CD4-positive, alpha-beta T cell (primary cell): ENCODE measurements at regions of chr1 and their contacts with region 1.

Region 1: DNA sequence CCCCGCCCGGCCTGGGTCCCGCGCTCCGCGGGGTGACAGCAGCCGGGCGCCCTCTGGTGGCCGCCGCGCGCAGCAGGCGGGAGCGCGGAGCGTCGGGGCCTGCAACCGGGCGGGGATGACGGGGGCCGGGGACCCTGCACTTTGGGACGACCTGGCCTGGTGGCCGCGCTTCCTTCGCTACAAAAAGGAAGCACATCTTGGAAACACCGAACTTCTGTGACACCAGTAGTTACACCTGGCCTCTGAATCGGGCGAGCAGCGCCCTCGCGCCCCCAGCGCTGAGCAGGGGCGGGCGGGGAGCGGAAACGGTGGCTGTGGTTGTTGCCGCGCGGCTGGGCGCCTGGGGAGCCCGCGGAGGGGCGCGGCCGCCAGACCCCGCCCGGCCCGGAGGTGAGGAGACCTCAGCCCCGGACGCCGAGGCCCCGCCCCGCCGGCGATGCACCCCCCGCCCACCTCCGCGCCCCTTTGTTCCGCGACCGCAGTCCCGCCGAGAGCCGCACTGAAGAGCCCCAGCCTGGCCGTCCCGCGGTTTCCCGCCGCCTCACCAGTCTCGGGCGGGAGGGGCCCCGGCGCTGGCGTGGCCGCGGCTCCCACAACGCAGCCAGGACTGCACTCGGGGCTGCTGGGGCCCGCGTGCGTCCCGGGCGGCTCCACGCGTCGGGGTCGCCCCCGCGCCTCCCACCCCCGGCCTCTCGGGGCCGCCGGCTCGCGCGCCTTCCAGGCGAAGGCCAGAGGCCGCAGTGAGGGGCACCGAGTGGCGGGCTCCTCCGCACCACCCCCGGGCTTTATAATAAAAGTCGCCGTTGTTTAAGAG is 59.3 kb downstream of the H3-3A start:
- DNase-seq: peak; percentile 48 to 90 (median 70)
- ATAC-seq: peak; percentile 54
- H3K4me3 ChIP-seq: peak overlapping the region; percentile 58
- H3K4me3 Mint-ChIP-seq: peak overlapping the region; percentile 80
- H3K27ac ChIP-seq: peak overlapping the region; percentile 45 to 77
- H3K27ac Mint-ChIP-seq: peak overlapping the region; percentile 91
- H3K4me1 ChIP-seq: peaks cover 37% of the 10 kb centered on the region
- H3K4me1 Mint-ChIP-seq: peaks cover 33% of the 10 kb centered on the region
- H3K27me3 ChIP-seq: no peaks in the 10 kb centered on the region
- H3K27me3 Mint-ChIP-seq: no peaks in the 10 kb centered on the region
- CTCF ChIP-seq: peak; percentile 64

Region 2: DNA sequence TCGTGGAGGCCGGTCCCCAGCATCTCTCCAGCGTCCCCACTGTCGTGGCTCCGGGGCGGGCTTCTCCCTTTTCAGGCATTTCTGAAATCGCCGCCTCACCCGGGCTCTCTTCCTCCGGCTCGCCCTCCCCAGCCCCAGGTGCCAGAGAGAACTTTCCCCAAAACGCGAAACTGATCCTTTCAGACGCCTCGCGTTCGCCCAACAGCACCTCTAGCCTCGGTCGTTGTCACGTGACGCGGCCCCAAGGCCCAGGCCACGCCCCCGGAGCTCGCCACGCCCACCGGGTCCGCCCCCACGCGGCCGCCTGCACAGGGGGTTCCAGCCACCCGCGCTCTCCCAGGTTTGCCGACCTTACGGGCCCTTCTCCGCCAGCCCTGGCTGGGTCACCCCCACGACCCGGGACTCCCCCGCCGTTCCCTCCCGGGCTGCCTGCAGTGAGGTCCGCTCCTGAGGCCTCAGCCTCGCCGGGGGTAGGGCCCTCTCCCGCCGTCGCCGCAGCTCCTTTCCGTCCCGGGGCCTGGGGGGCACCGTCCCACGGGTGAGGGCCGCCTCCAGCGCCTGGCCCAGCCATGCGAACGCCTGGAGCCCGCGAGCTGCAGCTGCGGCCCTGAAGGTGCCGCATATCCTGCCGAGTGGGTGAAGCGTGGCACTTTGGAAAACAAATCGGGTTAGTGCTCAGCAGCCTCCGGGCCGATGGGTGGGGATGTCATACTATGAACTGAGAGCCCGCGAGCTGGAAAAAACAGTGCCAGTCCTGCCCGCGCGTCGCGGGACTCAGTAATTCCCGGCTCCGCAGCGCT is 38.3 kb before region 1 on chr1:
- CTCF ChIA-PET with region 1: interaction called, 3 read pairs
- POLR2A ChIA-PET with region 1: interaction called, 5 read pairs
- intact Hi-C with region 1: loop called in 1 of 2 experiments (anchors 5 kb)
- DNase-seq: peak; percentile 83 to 96 (median 90)
- ATAC-seq: peak; percentile 94
- H3K4me3 ChIP-seq: peak overlapping the region; percentile 77
- H3K4me3 Mint-ChIP-seq: peak overlapping the region; percentile 91
- H3K27ac ChIP-seq: peak overlapping the region in 1 of 2 donors; percentile 7
- H3K27ac Mint-ChIP-seq: peak overlapping the region; percentile 39
- H3K4me1 ChIP-seq: peaks cover 19% of the 10 kb centered on the region
- H3K4me1 Mint-ChIP-seq: peaks cover 10% of the 10 kb centered on the region
- H3K27me3 ChIP-seq: no peaks in the 10 kb centered on the region
- H3K27me3 Mint-ChIP-seq: no peaks in the 10 kb centered on the region
- CTCF ChIP-seq: no peak

Region 3: DNA sequence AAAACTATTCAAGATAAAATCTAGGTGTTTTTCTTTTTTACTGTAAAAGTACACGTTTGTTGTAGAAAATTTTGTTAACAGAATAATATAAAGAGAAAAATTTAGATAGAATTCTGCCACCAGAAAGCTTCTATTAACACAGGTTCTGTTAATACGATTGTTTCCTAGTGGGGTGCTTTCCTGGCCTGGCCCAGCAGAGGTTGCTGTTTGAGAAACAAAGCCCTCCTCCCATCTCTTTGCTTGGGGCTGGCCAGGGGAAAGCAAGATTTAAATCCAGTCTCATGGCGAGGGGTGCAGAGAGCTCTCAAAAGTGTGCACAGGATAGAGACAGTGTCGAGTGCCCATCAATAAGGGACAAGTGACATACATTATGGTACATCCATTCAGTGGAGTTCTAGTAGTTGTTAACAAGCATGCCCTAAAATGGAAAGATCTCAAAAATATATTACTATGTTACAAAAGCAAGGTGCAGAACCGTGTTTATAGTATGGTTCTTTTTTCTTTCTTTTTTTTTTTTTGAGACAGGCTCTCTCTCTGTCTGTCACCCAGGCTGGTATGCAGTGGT is 79.3 kb after region 1 on chr1:
- CTCF ChIA-PET with region 1: interaction called, 40 read pairs
- POLR2A ChIA-PET with region 1: interaction called, 7 read pairs
- intact Hi-C with region 1: loop called (anchors 1 kb)
- DNase-seq: peak in 1 of 14 experiments; percentile 15
- ATAC-seq: no peak
- H3K4me3 ChIP-seq: no peak overlapping the region
- H3K4me3 Mint-ChIP-seq: no peak overlapping the region
- H3K27ac ChIP-seq: no peak overlapping the region
- H3K27ac Mint-ChIP-seq: no peak overlapping the region
- H3K4me1 ChIP-seq: no peaks in the 10 kb centered on the region
- H3K4me1 Mint-ChIP-seq: no peaks in the 10 kb centered on the region
- H3K27me3 ChIP-seq: no peaks in the 10 kb centered on the region
- H3K27me3 Mint-ChIP-seq: peaks cover 29% of the 10 kb centered on the region
- CTCF ChIP-seq: no peak

Region 4: GRCh38 chr1:226332947-226333346 is 211.2 kb after region 1 on chr1:
- CTCF ChIA-PET with region 1: interaction called, 7 read pairs
- POLR2A ChIA-PET with region 1: interaction called, 3 read pairs
- intact Hi-C with region 1: loop called (anchors 1 to 2 kb)
- DNase-seq: peak in 2 of 14 experiments; percentile 11 to 23
- ATAC-seq: peak; percentile 35
- H3K4me3 ChIP-seq: peak overlapping the region; percentile 13
- H3K4me3 Mint-ChIP-seq: peak overlapping the region; percentile 26
- H3K27ac ChIP-seq: no peak overlapping the region
- H3K27ac Mint-ChIP-seq: no peak overlapping the region
- H3K4me1 ChIP-seq: peaks cover 4% of the 10 kb centered on the region
- H3K4me1 Mint-ChIP-seq: peaks cover 6% of the 10 kb centered on the region
- H3K27me3 ChIP-seq: no peaks in the 10 kb centered on the region
- H3K27me3 Mint-ChIP-seq: no peaks in the 10 kb centered on the region
- CTCF ChIP-seq: no peak

Region 5: DNA sequence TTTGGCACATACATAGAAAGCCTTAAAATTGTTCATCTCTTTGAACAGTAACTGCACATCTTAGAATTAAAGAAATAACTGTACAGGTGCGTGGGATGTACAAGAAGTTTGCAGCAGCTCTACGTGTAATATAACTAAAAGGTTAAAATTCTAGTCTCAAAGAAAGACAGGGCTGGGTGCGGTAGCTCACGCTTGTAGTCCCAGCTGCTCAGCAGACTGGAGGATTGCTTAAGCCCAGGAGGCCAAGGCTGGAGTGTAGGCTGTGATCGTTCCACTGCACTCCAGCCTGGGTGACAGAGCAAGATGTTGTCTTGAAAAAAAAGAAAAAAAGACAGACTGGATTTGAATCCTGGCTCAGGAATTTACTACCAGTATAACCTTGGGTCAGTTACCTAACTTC is 272.7 kb after region 1 on chr1:
- CTCF ChIA-PET with region 1: no interaction called
- POLR2A ChIA-PET with region 1: no interaction called
- intact Hi-C with region 1: no loop called
- DNase-seq: no peak
- ATAC-seq: no peak
- H3K4me3 ChIP-seq: no peak overlapping the region
- H3K4me3 Mint-ChIP-seq: no peak overlapping the region
- H3K27ac ChIP-seq: no peak overlapping the region
- H3K27ac Mint-ChIP-seq: no peak overlapping the region
- H3K4me1 ChIP-seq: no peaks in the 10 kb centered on the region
- H3K4me1 Mint-ChIP-seq: peaks cover 28% of the 10 kb centered on the region
- H3K27me3 ChIP-seq: no peaks in the 10 kb centered on the region
- H3K27me3 Mint-ChIP-seq: no peaks in the 10 kb centered on the region
- CTCF ChIP-seq: no peak